Panc1 (cell line): ENCODE measurements at regions of chr7 and their contacts with region 1.

Region 1: GRCh38 chr7:8436965-8437364 is 3.6 kb downstream of the NXPH1 start:
- DNase-seq: no peak
- ATAC-seq: peak; percentile 77
- H3K4me3 ChIP-seq: no peak overlapping the region
- H3K27ac ChIP-seq: no peak overlapping the region
- H3K4me1 ChIP-seq: peaks cover 5% of the 10 kb centered on the region; the same call in 1 of the 2 replicates
- H3K27me3 ChIP-seq: peaks cover 55% of the 10 kb centered on the region
- CTCF ChIP-seq: peak; percentile 96

Region 2: DNA sequence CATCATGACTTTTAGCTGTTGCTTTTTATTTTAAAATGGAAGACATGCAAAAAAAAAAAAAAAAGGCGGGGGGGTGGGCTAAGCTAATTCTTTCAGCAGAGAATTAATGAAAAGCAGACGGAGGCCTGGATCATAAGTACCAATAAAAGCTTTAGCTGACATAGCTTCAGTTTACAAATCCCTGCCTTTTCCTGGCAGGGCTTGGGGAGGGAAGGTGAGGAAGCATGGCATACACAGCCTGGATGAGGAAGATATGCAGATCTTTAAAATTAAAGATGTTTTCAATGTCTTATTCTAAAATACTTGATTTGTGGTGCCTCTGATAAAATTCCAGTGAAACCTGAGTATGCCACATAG is 232.0 kb before region 1 on chr7:
- CTCF ChIA-PET with region 1: interaction called, 16 read pairs
- POLR2A ChIA-PET with region 1: no interaction called
- in situ Hi-C with region 1: no loop called
- intact Hi-C with region 1: no loop called
- DNase-seq: no peak
- ATAC-seq: no peak
- H3K4me3 ChIP-seq: no peak overlapping the region
- H3K27ac ChIP-seq: no peak overlapping the region
- H3K4me1 ChIP-seq: no peaks in the 10 kb centered on the region
- H3K27me3 ChIP-seq: peaks cover 38% of the 10 kb centered on the region
- CTCF ChIP-seq: no peak

Region 3: DNA sequence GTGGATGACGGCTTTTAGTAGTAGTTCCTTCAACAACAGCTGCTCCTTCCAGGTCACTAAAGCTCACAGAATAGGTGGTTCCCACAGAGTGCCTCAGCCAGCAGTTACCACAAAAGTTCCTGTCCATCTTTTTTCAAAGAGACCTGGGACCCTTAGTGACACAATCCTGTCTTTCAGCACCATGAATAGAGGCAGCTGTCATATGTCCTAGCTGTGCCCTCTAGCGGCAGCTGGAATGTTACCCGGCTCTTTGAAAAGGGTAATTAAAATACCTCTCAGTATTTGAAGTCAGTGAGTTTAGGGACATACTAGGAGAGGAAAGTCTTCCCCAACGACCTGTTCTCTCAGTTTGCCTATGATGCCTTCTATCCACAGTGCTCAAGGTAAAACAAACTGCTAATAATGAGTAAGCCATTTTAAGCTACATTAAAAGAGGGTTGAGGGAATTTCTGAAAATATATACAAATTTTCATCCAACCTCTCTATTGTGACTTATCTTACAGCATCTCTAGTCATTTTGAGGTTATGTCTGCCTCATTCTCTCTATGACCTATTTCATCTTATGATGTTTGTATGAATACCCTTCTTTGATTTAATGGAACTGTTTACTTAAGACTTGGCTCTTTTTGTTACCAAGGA is 287.2 kb after region 1 on chr7:
- CTCF ChIA-PET with region 1: interaction called, 3 read pairs
- POLR2A ChIA-PET with region 1: no interaction called
- in situ Hi-C with region 1: no loop called
- intact Hi-C with region 1: loop called (anchors 1 kb)
- DNase-seq: peak; percentile 20
- ATAC-seq: peak; percentile 74
- H3K4me3 ChIP-seq: no peak overlapping the region
- H3K27ac ChIP-seq: no peak overlapping the region
- H3K4me1 ChIP-seq: no peaks in the 10 kb centered on the region
- H3K27me3 ChIP-seq: no peaks in the 10 kb centered on the region
- CTCF ChIP-seq: peak; percentile 86

Region 4: GRCh38 chr7:8773518-8773917 is 336.6 kb after region 1 on chr7:
- CTCF ChIA-PET with region 1: no interaction called
- POLR2A ChIA-PET with region 1: no interaction called
- in situ Hi-C with region 1: no loop called
- intact Hi-C with region 1: no loop called
- DNase-seq: no peak
- ATAC-seq: no peak
- H3K4me3 ChIP-seq: no peak overlapping the region
- H3K27ac ChIP-seq: no peak overlapping the region
- H3K4me1 ChIP-seq: no peaks in the 10 kb centered on the region
- H3K27me3 ChIP-seq: no peaks in the 10 kb centered on the region
- CTCF ChIP-seq: no peak

Region 5: DNA sequence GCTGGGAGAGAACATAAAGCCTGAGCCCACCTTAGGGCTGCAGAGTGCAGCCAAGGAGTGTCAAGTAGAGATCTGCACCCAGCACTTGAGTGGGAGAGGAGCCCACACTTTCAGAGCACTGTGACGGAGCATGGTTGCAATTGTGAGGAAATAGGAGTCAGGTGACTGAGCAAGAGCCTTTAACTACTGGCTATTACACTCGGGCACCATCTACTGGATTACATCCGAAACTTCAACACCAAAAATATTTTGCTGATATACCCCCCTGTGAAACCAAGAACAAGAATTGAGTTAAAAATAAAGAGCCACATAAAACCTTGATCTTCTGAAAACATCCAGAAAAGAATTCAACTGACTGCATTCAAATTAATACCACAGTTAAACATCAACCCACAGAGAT is 654.3 kb after region 1 on chr7:
- CTCF ChIA-PET with region 1: no interaction called
- POLR2A ChIA-PET with region 1: no interaction called
- in situ Hi-C with region 1: no loop called
- intact Hi-C with region 1: loop called (anchors 5 kb)
- DNase-seq: no peak
- ATAC-seq: no peak
- H3K4me3 ChIP-seq: no peak overlapping the region
- H3K27ac ChIP-seq: no peak overlapping the region
- H3K4me1 ChIP-seq: no peaks in the 10 kb centered on the region
- H3K27me3 ChIP-seq: no peaks in the 10 kb centered on the region
- CTCF ChIP-seq: peak; percentile 43